SK-N-SH (cell line): ENCODE measurements at regions of chr16 and their contacts with region 1.

Region 1: DNA sequence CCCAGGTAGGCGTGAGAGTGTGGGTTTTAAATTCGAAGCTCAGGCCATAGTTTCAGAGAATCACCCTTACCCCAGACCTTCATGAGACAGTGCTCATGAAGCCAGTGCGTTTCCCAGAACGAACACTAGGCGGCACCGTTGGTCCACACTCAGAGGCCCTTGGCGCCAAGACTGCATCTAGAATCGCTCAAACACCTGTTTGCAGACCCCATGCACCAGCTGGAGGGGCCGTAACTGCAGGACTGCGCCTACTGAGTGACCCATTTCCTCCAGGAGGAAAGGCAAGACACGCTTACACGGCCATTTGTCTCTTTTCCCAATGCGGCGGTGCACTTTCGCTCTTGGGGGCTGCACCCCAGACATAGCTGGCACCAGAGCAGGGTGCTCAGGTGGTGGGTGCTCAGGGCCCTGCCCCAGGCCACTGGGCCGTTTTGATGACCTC is 34.0 kb downstream of the ADGRG5 start:
- DNase-seq: peak; percentile 84
- H3K4me3 ChIP-seq: peak overlapping the region in 1 of 2 experiments; percentile 51; a peak in 1 of 4 replicates
- H3K27ac ChIP-seq: no peak overlapping the region
- H3K4me1 ChIP-seq: peaks cover 0 to 4% of the 10 kb centered on the region in 2 experiments; a peak in 1 of 4 replicates
- H3K27me3 ChIP-seq: no peaks in the 10 kb centered on the region
- CTCF ChIP-seq: peak; percentile 93
- EP300 ChIP-seq: no peak
- RAD21 ChIP-seq: peak; percentile 95

Region 2: GRCh38 chr16:57470683-57471082 is 105.8 kb before region 1 on chr16:
- CTCF ChIA-PET with region 1: no interaction called
- POLR2A ChIA-PET with region 1: no interaction called
- DNase-seq: peak; percentile 45
- H3K4me3 ChIP-seq: no peak overlapping the region
- H3K27ac ChIP-seq: peak overlapping the region in 1 of 2 experiments; percentile 95; a peak in 2 of 4 replicates
- H3K4me1 ChIP-seq: peaks cover 0 to 60% of the 10 kb centered on the region in 2 experiments; a peak in 2 of 4 replicates
- H3K27me3 ChIP-seq: no peaks in the 10 kb centered on the region
- CTCF ChIP-seq: no peak
- EP300 ChIP-seq: no peak
- RAD21 ChIP-seq: no peak

Region 3: GRCh38 chr16:57544119-57544653 is 32.3 kb before region 1 on chr16:
- CTCF ChIA-PET with region 1: interaction called, 20 read pairs
- POLR2A ChIA-PET with region 1: no interaction called
- DNase-seq: no peak
- H3K4me3 ChIP-seq: no peak overlapping the region
- H3K27ac ChIP-seq: no peak overlapping the region
- H3K4me1 ChIP-seq: no peaks in the 10 kb centered on the region
- H3K27me3 ChIP-seq: no peaks in the 10 kb centered on the region; the same call in 1 of the 2 replicates
- CTCF ChIP-seq: no peak
- EP300 ChIP-seq: no peak
- RAD21 ChIP-seq: no peak

Region 4: GRCh38 chr16:57564571-57565270 is 11.7 kb before region 1 on chr16:
- CTCF ChIA-PET with region 1: interaction called, 23 read pairs
- POLR2A ChIA-PET with region 1: no interaction called
- DNase-seq: no peak
- H3K4me3 ChIP-seq: no peak overlapping the region
- H3K27ac ChIP-seq: peak overlapping the region in 1 of 2 experiments; percentile 27; a peak in 2 of 4 replicates
- H3K4me1 ChIP-seq: no peaks in the 10 kb centered on the region; a peak in 2 of 4 replicates
- H3K27me3 ChIP-seq: no peaks in the 10 kb centered on the region
- CTCF ChIP-seq: no peak
- EP300 ChIP-seq: no peak
- RAD21 ChIP-seq: no peak

Region 5: GRCh38 chr16:57600048-57600835 is 23.8 kb after region 1 on chr16:
- CTCF ChIA-PET with region 1: interaction called, 116 read pairs
- POLR2A ChIA-PET with region 1: no interaction called
- DNase-seq: peak; percentile 67
- H3K4me3 ChIP-seq: no peak overlapping the region
- H3K27ac ChIP-seq: no peak overlapping the region
- H3K4me1 ChIP-seq: peaks cover 3% of the 10 kb centered on the region in 2 experiments; a peak in 1 of 4 replicates
- H3K27me3 ChIP-seq: no peaks in the 10 kb centered on the region
- CTCF ChIP-seq: peak; percentile 68
- EP300 ChIP-seq: no peak
- RAD21 ChIP-seq: peak; percentile 68

Region 6: GRCh38 chr16:57639172-57639887 is 62.9 kb after region 1 on chr16:
- CTCF ChIA-PET with region 1: interaction called, 28 read pairs
- POLR2A ChIA-PET with region 1: no interaction called
- DNase-seq: peak; percentile 93
- H3K4me3 ChIP-seq: no peak overlapping the region
- H3K27ac ChIP-seq: no peak overlapping the region
- H3K4me1 ChIP-seq: peaks cover 0 to 10% of the 10 kb centered on the region in 2 experiments; a peak in 1 of 4 replicates
- H3K27me3 ChIP-seq: no peaks in the 10 kb centered on the region
- CTCF ChIP-seq: no peak
- EP300 ChIP-seq: no peak
- RAD21 ChIP-seq: no peak

Region 7: GRCh38 chr16:57711346-57712026 is 135.0 kb after region 1 on chr16:
- CTCF ChIA-PET with region 1: interaction called, 10 read pairs
- POLR2A ChIA-PET with region 1: no interaction called
- DNase-seq: no peak
- H3K4me3 ChIP-seq: no peak overlapping the region
- H3K27ac ChIP-seq: no peak overlapping the region
- H3K4me1 ChIP-seq: no peaks in the 10 kb centered on the region; a peak in 1 of 4 replicates
- H3K27me3 ChIP-seq: peaks cover 17% of the 10 kb centered on the region
- CTCF ChIP-seq: no peak
- EP300 ChIP-seq: no peak
- RAD21 ChIP-seq: no peak

Region 8: DNA sequence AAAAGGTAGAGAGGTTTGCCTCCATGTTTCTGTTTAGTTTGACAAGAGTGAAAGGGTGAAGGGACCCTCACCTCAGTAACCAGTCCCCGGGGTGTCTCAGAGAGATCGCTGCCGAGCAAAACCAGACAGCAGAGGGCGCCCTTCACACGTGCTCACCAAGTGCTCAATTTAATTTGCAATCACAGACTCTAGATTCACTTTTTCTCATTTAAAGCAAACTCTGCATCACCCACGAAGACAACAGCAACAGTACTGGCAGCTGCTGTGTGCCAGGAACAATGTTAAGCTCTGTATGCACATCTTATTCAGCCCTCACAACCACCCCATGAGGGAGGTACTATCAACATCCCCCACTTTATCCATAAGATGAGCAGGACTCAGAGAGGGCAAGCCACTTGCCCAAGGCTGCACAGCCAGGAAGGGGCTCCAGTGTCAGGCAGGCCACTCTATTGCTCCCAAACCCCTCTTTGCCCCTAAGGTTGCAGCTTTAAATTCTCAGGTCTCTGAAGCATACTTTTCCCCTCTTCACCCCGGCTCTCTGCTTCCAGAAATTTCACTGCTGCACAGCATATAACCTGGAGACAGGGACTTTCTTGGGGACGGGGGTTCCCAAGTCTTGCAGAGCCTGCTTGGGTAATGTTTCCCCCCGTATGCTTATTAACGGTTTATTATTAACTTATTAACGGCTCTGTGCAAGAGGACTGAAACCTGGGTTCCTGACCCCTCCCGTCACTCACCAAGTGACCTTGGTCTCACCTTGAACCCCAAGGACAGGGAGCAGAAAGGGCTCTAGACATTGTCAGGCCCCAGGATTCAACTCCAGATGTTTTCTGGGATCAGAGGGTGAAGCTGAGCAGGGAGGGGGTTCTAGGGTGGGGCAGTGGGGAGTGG is 323.6 kb after region 1 on chr16:
- CTCF ChIA-PET with region 1: interaction called, 11 read pairs
- POLR2A ChIA-PET with region 1: no interaction called
- DNase-seq: peak; percentile 86
- H3K4me3 ChIP-seq: no peak overlapping the region
- H3K27ac ChIP-seq: no peak overlapping the region
- H3K4me1 ChIP-seq: no peaks in the 10 kb centered on the region; a peak in 1 of 4 replicates
- H3K27me3 ChIP-seq: no peaks in the 10 kb centered on the region
- CTCF ChIP-seq: peak; percentile 95
- EP300 ChIP-seq: no peak
- RAD21 ChIP-seq: peak; percentile 94